BJ (cell line): ENCODE measurements at regions of chr6 and their contacts with region 1.

Region 1: GRCh38 chr6:133568970-133569889 is 319.7 kb upstream of the TCF21 start:
- DNase-seq: peak; percentile 28
- H3K4me3 ChIP-seq: peak overlapping the region; percentile 29
- H3K27me3 ChIP-seq: no peaks in the 10 kb centered on the region
- CTCF ChIP-seq: peak; percentile 97

Region 2: DNA sequence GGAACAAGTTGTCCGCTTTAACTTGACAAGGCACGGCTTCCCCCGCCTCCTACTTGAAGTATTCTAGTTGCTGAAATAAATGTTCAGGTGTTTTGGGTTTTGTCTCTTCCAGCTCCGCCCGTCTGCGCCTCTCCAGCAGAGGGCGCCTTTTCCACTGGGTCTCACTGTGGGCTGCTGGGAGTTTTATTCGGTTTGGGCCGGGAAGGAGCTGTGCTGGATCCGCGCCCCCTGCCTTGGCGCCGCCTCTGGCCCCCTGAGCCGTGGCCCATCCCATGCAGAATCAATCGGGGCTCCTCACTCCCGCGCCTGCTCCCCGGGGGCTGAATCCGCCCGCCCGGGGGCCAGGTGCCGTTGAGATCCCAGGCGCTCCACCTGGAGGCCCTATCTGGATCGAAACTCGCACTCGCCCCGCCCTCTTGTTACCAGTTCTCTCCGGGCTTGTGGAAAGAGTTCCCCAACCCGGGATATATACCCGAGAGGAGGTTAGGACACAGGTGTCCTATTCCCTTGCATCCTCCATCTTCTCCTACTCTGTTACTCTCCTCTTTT is 268.6 kb after region 1 on chr6:
- CTCF ChIA-PET with region 1: interaction called, 47 read pairs
- POLR2A ChIA-PET with region 1: no interaction called
- DNase-seq: no peak
- H3K4me3 ChIP-seq: peak overlapping the region; percentile 32
- H3K27me3 ChIP-seq: no peaks in the 10 kb centered on the region
- CTCF ChIP-seq: peak; percentile 73